ENCODE measurements at regions of chr7 and their contacts with region 1.

Region 1: GRCh38 chr7:142817506-142817905 is 37.4 kb upstream of the EPHB6 start:
- DNase-seq: no peak
- ATAC-seq: no peak
- H3K4me3 Mint-ChIP-seq: no peak overlapping the region
- H3K27ac Mint-ChIP-seq: no peak overlapping the region
- H3K4me1 Mint-ChIP-seq: peaks cover 22% of the 10 kb centered on the region
- H3K27me3 Mint-ChIP-seq: peaks cover 18% of the 10 kb centered on the region

Region 2: DNA sequence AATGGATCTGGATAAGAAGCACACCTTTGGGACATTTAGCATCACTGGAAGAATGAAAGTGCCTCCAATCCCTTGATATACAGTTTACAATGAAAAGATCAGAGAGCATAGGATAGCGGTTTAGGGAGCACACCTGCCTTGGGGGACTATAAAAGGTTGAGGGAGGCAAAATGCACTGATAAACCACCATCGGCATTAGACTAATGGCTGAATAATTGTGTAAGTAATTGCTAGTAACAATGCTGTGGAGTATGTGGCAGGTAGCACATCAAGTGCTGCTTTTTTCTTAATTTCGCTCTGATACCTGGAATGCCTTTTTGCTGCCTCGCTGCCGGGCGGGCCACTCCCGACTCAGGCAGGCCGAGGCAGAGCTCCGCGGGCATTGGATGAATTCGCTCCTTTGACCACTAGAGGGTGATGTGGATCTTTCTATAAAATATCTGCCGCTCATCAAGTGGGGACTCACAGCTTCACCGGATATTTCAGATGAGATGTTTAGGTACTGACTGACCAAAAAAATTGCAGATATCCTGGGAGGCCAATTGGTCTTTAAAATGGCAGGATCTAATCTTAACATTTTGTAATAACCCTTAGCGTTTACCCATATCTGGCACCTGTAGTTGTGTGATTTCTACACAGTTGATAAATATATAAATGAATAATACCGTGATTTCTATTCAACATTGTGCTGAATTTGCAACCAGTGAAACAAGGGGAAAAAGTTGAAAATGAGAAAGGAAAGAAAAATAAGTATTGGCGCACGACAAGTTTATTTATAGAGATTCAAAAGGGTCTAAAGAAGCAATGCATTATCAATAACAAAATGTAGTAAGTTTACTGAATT is 185.0 kb before region 1 on chr7:
- CTCF ChIA-PET with region 1: interaction called, 92 read pairs
- POLR2A ChIA-PET with region 1: no interaction called
- DNase-seq: peak; percentile 71
- ATAC-seq: peak; percentile 81
- H3K4me3 Mint-ChIP-seq: no peak overlapping the region
- H3K27ac Mint-ChIP-seq: no peak overlapping the region
- H3K4me1 Mint-ChIP-seq: peaks cover 18% of the 10 kb centered on the region
- H3K27me3 Mint-ChIP-seq: peaks cover 13% of the 10 kb centered on the region

Region 3: GRCh38 chr7:142833174-142834048 is 15.9 kb after region 1 on chr7:
- CTCF ChIA-PET with region 1: interaction called, 33 read pairs
- POLR2A ChIA-PET with region 1: interaction called, 9 read pairs
- DNase-seq: no peak
- ATAC-seq: no peak
- H3K4me3 Mint-ChIP-seq: no peak overlapping the region
- H3K27ac Mint-ChIP-seq: no peak overlapping the region
- H3K4me1 Mint-ChIP-seq: peaks cover 13% of the 10 kb centered on the region
- H3K27me3 Mint-ChIP-seq: peaks cover 7% of the 10 kb centered on the region

Measured in activated CD8-positive, alpha-beta T cell treated with anti-CD3 and anti-CD28 coated beads, Interleukin-2, amount 10 ng/mL, durations not matched to agents 7 days and 5 days (primary cell).